Activated CD4-positive, alpha-beta memory T cell treated with anti-CD3 and anti-CD28 coated beads for 36 hours (primary cell): ENCODE measurements at regions of chr1 and their contacts with region 1.

Region 1: GRCh38 chr1:111275079-111275478 is 15.6 kb upstream of the CHIA start:
- DNase-seq: peak; percentile 69
- H3K4me3 Mint-ChIP-seq: no peak overlapping the region
- H3K27ac Mint-ChIP-seq: peak overlapping the region; percentile 79
- H3K4me1 Mint-ChIP-seq: peaks cover 36% of the 10 kb centered on the region
- H3K27me3 Mint-ChIP-seq: peaks cover 21% of the 10 kb centered on the region

Region 2: DNA sequence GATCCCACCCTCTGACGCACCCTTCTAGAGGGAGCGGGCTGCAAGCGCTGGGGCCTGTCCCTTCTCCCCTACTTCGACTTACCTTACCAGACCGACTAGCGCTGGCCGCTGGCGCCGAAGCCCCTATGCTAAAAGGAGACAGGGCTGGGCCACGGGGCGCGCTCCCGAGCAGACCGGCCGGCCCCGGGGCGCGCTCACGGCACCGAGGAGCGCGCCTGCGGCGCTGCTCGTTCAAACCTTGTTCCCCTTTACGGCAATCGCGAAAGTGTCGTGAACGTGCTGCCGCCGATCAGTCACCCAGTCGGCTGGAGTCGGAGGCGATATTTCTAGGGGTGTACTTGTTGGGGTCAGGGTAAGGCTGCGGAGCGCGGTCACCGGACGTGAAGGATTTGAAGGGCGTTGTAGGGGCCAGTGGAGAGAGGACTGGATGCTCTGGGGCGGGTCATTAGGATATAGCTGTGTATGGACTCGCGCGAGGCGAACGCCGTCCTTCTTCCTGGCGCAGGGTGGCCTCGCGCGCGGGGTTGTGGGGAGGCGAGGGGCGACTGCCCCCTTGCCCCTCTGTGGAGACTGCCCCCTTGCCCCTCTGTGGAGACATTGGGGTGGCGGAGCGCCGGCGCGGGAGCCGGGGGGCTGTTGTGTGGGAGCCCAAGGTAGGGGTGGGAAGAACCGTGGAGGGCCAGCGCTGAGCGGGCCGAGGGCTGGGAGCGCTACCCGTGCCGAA is 135.0 kb before region 1 on chr1 and contains the starts of genes CEPT1 and DRAM2:
- CTCF ChIA-PET with region 1: no interaction called
- POLR2A ChIA-PET with region 1: no interaction called
- intact Hi-C with region 1: loop called (anchors 5 kb)
- DNase-seq: peak; percentile 95
- H3K4me3 Mint-ChIP-seq: peak within 1 kb of the TSS; percentile 92
- H3K27ac Mint-ChIP-seq: peak within 1 kb of the TSS; percentile 88
- H3K4me1 Mint-ChIP-seq: peaks cover 34% of the 10 kb centered on the region
- H3K27me3 Mint-ChIP-seq: no peaks in the 10 kb centered on the region
- total RNA-seq, gene CEPT1: 23.9 to 28.8 TPM
- total RNA-seq, gene DRAM2: 30.1 to 30.5 TPM